Activated CD4-positive, alpha-beta memory T cell treated with anti-CD3 and anti-CD28 coated beads, Interleukin-2, amount 10 ng/mL, durations not matched to agents 7 days and 5 days (primary cell): ENCODE measurements at regions of chr19 and their contacts with region 1.

Region 1: DNA sequence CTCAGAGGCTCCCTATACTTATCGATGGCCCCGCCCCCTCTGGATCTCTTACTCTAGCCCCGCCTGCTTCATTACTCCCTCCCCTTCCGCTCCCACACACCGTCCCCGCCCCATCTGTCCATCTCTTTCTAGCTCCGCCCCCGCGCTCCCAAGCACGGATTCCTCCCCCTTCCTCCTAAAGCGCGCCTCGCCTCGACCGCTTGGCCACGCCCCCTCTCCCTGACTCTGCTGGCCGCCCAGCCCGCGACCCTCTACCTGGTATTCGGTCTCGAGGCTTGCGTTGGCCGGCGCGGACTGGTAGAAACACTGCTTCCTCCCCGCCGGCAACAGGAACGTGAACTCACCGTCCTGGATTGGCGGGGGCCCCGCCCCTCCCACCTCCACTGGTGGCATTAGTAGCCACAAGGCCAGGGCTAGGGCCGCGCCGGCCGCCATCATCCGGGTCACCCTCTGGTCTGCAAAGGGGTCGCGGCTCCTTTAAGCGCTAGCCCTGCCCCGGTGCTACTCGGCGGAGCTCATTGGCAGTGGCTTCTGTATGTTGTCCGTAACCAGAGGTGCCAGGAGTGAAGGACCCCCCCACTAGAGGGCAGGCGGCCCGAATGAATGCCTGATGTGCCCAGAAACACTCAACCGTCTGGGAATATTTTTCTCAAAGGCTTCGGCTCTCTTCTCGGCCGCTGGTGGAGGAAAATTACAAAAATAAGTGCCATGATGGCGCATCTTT is at the start of gene TMED1:
- DNase-seq: peak; percentile 98
- H3K4me3 Mint-ChIP-seq: peak within 1 kb of the TSS; percentile 86
- H3K27ac Mint-ChIP-seq: peak within 1 kb of the TSS; percentile 93
- H3K4me1 Mint-ChIP-seq: peaks cover 16% of the 10 kb centered on the region
- H3K27me3 Mint-ChIP-seq: peaks cover 4% of the 10 kb centered on the region
- total RNA-seq, gene TMED1: 15.7 to 17.3 TPM

Region 2: GRCh38 chr19:10820173-10820572 is 15.7 kb before region 1 on chr19:
- CTCF ChIA-PET with region 1: interaction called, 5 read pairs
- POLR2A ChIA-PET with region 1: interaction called, 14 read pairs
- DNase-seq: no peak
- H3K4me3 Mint-ChIP-seq: no peak overlapping the region
- H3K27ac Mint-ChIP-seq: no peak overlapping the region
- H3K4me1 Mint-ChIP-seq: peaks cover 16% of the 10 kb centered on the region
- H3K27me3 Mint-ChIP-seq: no peaks in the 10 kb centered on the region

Region 3: GRCh38 chr19:10858204-10858828 is 22.4 kb after region 1 on chr19:
- CTCF ChIA-PET with region 1: interaction called, 15 read pairs
- POLR2A ChIA-PET with region 1: interaction called, 6 read pairs
- DNase-seq: peak; percentile 37
- H3K4me3 Mint-ChIP-seq: no peak overlapping the region
- H3K27ac Mint-ChIP-seq: no peak overlapping the region
- H3K4me1 Mint-ChIP-seq: peaks cover 7% of the 10 kb centered on the region
- H3K27me3 Mint-ChIP-seq: no peaks in the 10 kb centered on the region

Region 4: GRCh38 chr19:10864538-10864899 is 28.6 kb after region 1 on chr19:
- CTCF ChIA-PET with region 1: interaction called, 40 read pairs
- POLR2A ChIA-PET with region 1: interaction called, 18 read pairs
- DNase-seq: peak; percentile 85
- H3K4me3 Mint-ChIP-seq: no peak overlapping the region
- H3K27ac Mint-ChIP-seq: no peak overlapping the region
- H3K4me1 Mint-ChIP-seq: peaks cover 30% of the 10 kb centered on the region
- H3K27me3 Mint-ChIP-seq: no peaks in the 10 kb centered on the region

Region 5: GRCh38 chr19:10870955-10871603 is 35.2 kb after region 1 on chr19 and contains the start of gene CARM1:
- CTCF ChIA-PET with region 1: interaction called, 40 read pairs
- POLR2A ChIA-PET with region 1: interaction called, 18 read pairs
- DNase-seq: peak; percentile 100
- H3K4me3 Mint-ChIP-seq: peak within 1 kb of the TSS; percentile 78
- H3K27ac Mint-ChIP-seq: peak within 1 kb of the TSS; percentile 73
- H3K4me1 Mint-ChIP-seq: peaks cover 33% of the 10 kb centered on the region
- H3K27me3 Mint-ChIP-seq: no peaks in the 10 kb centered on the region
- total RNA-seq, gene CARM1: 39.3 to 40.2 TPM